Activated T-helper 2 cell treated with anti-CD3 and anti-CD28 coated beads, Interferon-gamma antibody, Interleukin-2, Interleukin-4, amounts not matched to agents 10 μg/mL and 5 μg/mL and 100 μg/mL, durations not matched to agents 14 hours and 24 hours and 36 hours (primary cell): ENCODE measurements at regions of chr21 and their contacts with region 1.

Region 1: GRCh38 chr21:33199516-33200217 is 30.1 kb upstream of the IFNAR2 start:
- DNase-seq: peak; percentile 69
- H3K4me3 Mint-ChIP-seq: no peak overlapping the region
- H3K27ac Mint-ChIP-seq: no peak overlapping the region
- H3K4me1 Mint-ChIP-seq: peaks cover 32% of the 10 kb centered on the region
- H3K27me3 Mint-ChIP-seq: peaks cover 6% of the 10 kb centered on the region

Region 2: DNA sequence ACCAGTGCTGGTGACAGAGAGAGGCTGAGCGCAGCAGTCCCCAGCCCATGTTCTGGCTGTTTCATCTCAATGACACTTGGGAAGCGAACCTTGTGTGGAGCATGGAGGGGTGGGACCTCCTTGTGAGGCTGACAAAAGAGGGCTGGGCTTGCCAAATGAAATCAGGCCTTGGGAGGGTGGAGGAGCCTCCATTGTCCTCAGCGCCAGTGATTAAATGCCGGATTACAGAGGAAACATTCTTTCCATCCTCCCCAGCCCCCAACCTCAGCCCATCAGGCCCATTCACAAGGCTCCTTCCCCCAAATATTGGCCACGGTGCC is 364.8 kb before region 1 on chr21:
- intact Hi-C with region 1: loop called (anchors 5 kb)
- DNase-seq: no peak
- H3K4me3 Mint-ChIP-seq: no peak overlapping the region
- H3K27ac Mint-ChIP-seq: no peak overlapping the region
- H3K4me1 Mint-ChIP-seq: no peaks in the 10 kb centered on the region
- H3K27me3 Mint-ChIP-seq: peaks cover 25% of the 10 kb centered on the region

Region 3: DNA sequence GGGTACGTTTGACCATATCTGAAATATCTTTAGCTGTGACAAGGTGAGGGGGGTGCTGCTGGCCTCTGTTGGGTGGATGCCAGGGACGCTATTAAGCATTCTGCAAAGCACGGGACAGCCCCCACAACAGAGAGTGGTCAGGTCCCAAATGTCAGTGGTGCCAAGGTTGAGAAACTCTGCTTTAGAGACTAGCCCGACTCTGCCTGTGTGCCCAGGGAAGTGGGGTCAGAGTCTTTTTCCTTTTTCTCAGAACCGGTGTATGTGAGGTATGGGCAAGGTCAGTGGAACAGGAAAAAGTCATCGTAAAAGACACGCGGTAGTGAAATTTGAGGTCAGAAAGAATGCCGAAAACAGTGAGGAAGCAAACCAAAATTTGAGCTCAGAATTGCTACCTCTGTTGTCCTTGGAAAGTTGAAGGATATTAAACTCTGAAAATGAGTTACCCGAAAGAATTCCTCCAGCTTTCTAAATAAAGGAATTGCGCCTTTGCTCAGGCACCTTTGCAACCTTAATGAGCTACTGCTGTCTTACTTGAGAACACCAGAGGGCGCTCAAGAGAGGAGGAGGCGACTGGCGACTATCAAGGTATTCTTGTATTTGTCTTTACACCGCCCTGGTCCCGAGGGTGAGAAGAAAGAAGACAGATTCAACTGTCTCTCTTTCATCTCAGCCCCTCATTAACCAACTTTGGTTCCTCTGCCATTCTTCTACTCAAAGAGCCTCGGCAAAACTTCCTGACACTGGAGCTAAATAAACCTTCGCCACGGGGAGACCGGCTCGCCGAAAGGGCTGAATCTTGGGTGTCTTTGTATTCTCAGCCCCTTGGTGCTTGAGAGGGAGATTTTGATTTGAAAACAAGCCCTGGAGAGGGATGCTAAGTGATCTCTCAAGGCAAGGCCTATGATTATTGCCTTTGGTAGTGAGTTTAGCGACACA is 259.3 kb before region 1 on chr21:
- intact Hi-C with region 1: loop called (anchors 2 kb)
- DNase-seq: no peak
- H3K4me3 Mint-ChIP-seq: no peak overlapping the region
- H3K27ac Mint-ChIP-seq: no peak overlapping the region
- H3K4me1 Mint-ChIP-seq: peaks cover 2% of the 10 kb centered on the region
- H3K27me3 Mint-ChIP-seq: peaks cover 4% of the 10 kb centered on the region

Region 4: GRCh38 chr21:33266050-33266788 is 66.6 kb after region 1 on chr21 and contains the start of gene IL10RB:
- intact Hi-C with region 1: loop called (anchors 5 kb)
- DNase-seq: peak; percentile 62
- H3K4me3 Mint-ChIP-seq: peak within 1 kb of the TSS; percentile 98
- H3K27ac Mint-ChIP-seq: peak within 1 kb of the TSS; percentile 89
- H3K4me1 Mint-ChIP-seq: peaks cover 32% of the 10 kb centered on the region
- H3K27me3 Mint-ChIP-seq: no peaks in the 10 kb centered on the region
- total RNA-seq, gene IL10RB: 23.4 and 24.7 TPM in 2 replicates

Region 5: GRCh38 chr21:33360881-33361602 is 161.4 kb after region 1 on chr21:
- intact Hi-C with region 1: loop called (anchors 1 kb)
- DNase-seq: peak; percentile 73
- H3K4me3 Mint-ChIP-seq: peak overlapping the region; percentile 67
- H3K27ac Mint-ChIP-seq: peak overlapping the region; percentile 66
- H3K4me1 Mint-ChIP-seq: peaks cover 18% of the 10 kb centered on the region
- H3K27me3 Mint-ChIP-seq: no peaks in the 10 kb centered on the region

Region 6: GRCh38 chr21:33374450-33375096 is 174.9 kb after region 1 on chr21:
- intact Hi-C with region 1: loop called (anchors 2 kb)
- DNase-seq: peak; percentile 29
- H3K4me3 Mint-ChIP-seq: no peak overlapping the region
- H3K27ac Mint-ChIP-seq: no peak overlapping the region
- H3K4me1 Mint-ChIP-seq: peaks cover 9% of the 10 kb centered on the region
- H3K27me3 Mint-ChIP-seq: peaks cover 12% of the 10 kb centered on the region

Region 7: GRCh38 chr21:33441489-33442477 is 242.1 kb after region 1 on chr21:
- intact Hi-C with region 1: loop called (anchors 1 kb)
- DNase-seq: no peak
- H3K4me3 Mint-ChIP-seq: no peak overlapping the region
- H3K27ac Mint-ChIP-seq: no peak overlapping the region
- H3K4me1 Mint-ChIP-seq: peaks cover 3% of the 10 kb centered on the region
- H3K27me3 Mint-ChIP-seq: no peaks in the 10 kb centered on the region